ENCODE measurements at regions of chr15 and their contacts with region 1.

Region 1: DNA sequence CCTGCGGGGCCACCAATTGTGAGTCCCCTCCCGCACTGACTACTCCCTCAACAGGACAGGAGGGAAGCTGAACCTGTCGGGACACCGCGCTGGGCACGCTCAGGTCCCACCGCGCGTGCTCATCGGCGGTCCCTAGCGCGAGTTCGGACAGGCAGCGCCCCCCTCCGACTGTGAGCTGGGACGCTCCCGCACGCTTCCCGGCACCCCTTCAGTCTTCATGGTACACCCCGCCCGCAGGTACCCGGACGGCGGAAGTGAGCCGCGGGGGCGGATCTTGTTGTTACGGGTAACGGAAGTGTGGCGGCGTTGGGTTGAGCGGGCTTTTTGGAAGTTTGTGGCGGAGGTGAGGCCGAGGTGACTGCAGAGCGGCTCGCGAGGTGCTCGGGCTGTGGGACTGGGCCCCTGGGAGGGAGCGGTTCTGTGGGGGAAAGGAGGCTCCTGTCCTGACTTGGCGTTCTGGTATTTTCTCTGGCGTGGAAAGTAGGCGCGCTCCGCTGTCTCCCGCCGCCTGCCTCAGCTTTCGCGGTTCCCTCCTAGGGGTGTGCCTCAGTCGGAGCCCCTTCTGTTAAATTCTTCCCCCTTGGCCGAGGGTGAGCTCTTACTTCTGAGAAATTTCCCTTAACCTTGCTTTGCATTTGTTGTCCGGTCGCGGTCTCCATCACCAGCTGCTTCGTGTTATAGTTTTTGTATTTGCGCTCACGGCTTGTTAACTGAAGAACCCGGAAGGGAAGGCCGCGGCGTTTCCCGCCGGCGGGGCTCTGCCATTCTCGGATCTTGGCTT is at the start of gene FANCI:
- DNase-seq: peak; percentile 84
- ATAC-seq: peak; percentile 98
- H3K4me3 ChIP-seq: peak within 1 kb of the TSS; percentile 82 to 96
- H3K27ac ChIP-seq: peak within 1 kb of the TSS; percentile 92
- H3K4me1 ChIP-seq: peaks cover 7% of the 10 kb centered on the region
- H3K27me3 ChIP-seq: no peaks in the 10 kb centered on the region
- CTCF ChIP-seq: peak; percentile 84
- total RNA-seq, gene FANCI: 96.2 TPM

Region 2: GRCh38 chr15:87597346-87598052 is 1646.4 kb before region 1 on chr15:
- CTCF ChIA-PET with region 1: no interaction called
- POLR2A ChIA-PET with region 1: interaction called, 11 read pairs
- in situ Hi-C with region 1: no loop called
- intact Hi-C with region 1: no loop called
- DNase-seq: no peak
- ATAC-seq: no peak
- H3K4me3 ChIP-seq: no peak overlapping the region
- H3K27ac ChIP-seq: no peak overlapping the region
- H3K4me1 ChIP-seq: no peaks in the 10 kb centered on the region
- H3K27me3 ChIP-seq: no peaks in the 10 kb centered on the region
- CTCF ChIP-seq: no peak

Region 3: GRCh38 chr15:88894348-88894818 is 349.5 kb before region 1 on chr15:
- CTCF ChIA-PET with region 1: no interaction called
- POLR2A ChIA-PET with region 1: interaction called, 11 read pairs
- in situ Hi-C with region 1: no loop called
- intact Hi-C with region 1: no loop called
- DNase-seq: no peak
- ATAC-seq: peak; percentile 53
- H3K4me3 ChIP-seq: peak overlapping the region; percentile 55 to 71
- H3K27ac ChIP-seq: peak overlapping the region; percentile 78
- H3K4me1 ChIP-seq: peaks cover 47% of the 10 kb centered on the region
- H3K27me3 ChIP-seq: no peaks in the 10 kb centered on the region
- CTCF ChIP-seq: peak; percentile 97

Region 4: DNA sequence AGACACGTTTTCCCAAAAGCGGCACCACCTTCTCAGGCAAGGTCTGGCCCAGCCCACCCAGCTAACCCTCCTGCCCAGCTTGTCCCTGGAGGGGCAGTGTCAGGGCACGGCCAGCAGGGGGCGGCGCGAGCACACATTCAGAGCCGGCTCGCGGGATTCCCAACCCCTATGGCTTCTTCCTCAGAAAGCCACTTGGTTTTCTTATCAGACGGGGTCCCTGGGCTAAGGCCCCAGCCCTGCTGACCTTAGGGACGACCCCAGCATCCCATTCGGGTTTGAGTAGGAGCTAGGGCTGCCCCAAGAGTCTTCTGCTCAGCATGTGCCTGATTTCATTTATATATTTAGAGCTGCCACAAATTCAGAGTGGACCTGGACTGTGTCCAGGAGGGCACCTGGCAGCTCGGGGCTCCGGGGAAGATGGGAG is 37.0 kb before region 1 on chr15:
- CTCF ChIA-PET with region 1: interaction called, 17 read pairs
- POLR2A ChIA-PET with region 1: interaction called, 3 read pairs
- in situ Hi-C with region 1: no loop called
- intact Hi-C with region 1: loop called (anchors 2 kb)
- DNase-seq: peak; percentile 33
- ATAC-seq: peak; percentile 95
- H3K4me3 ChIP-seq: peak overlapping the region; percentile 19 to 35; a peak in 3 of 4 replicates
- H3K27ac ChIP-seq: no peak overlapping the region
- H3K4me1 ChIP-seq: peaks cover 5% of the 10 kb centered on the region; the same call in 1 of the 2 replicates
- H3K27me3 ChIP-seq: no peaks in the 10 kb centered on the region
- CTCF ChIP-seq: peak; percentile 99

Region 5: GRCh38 chr15:89221543-89221942 is 22.3 kb before region 1 on chr15 and contains the start of gene RLBP1:
- CTCF ChIA-PET with region 1: interaction called, 10 read pairs
- POLR2A ChIA-PET with region 1: no interaction called
- in situ Hi-C with region 1: no loop called
- intact Hi-C with region 1: no loop called
- DNase-seq: no peak
- ATAC-seq: no peak
- H3K4me3 ChIP-seq: no peak within 1 kb of the TSS
- H3K27ac ChIP-seq: no peak within 1 kb of the TSS
- H3K4me1 ChIP-seq: no peaks in the 10 kb centered on the region
- H3K27me3 ChIP-seq: no peaks in the 10 kb centered on the region
- CTCF ChIP-seq: no peak
- total RNA-seq, gene RLBP1: not detected

Region 6: GRCh38 chr15:89278307-89278706 is 34.4 kb after region 1 on chr15:
- CTCF ChIA-PET with region 1: no interaction called
- POLR2A ChIA-PET with region 1: no interaction called
- in situ Hi-C with region 1: no loop called
- intact Hi-C with region 1: no loop called
- DNase-seq: no peak
- ATAC-seq: no peak
- H3K4me3 ChIP-seq: no peak overlapping the region
- H3K27ac ChIP-seq: no peak overlapping the region
- H3K4me1 ChIP-seq: no peaks in the 10 kb centered on the region
- H3K27me3 ChIP-seq: no peaks in the 10 kb centered on the region
- CTCF ChIP-seq: no peak